Cardiac septum (tissue), 1 donor: ENCODE measurements at regions of chr1 and their contacts with region 1.

Region 1: DNA sequence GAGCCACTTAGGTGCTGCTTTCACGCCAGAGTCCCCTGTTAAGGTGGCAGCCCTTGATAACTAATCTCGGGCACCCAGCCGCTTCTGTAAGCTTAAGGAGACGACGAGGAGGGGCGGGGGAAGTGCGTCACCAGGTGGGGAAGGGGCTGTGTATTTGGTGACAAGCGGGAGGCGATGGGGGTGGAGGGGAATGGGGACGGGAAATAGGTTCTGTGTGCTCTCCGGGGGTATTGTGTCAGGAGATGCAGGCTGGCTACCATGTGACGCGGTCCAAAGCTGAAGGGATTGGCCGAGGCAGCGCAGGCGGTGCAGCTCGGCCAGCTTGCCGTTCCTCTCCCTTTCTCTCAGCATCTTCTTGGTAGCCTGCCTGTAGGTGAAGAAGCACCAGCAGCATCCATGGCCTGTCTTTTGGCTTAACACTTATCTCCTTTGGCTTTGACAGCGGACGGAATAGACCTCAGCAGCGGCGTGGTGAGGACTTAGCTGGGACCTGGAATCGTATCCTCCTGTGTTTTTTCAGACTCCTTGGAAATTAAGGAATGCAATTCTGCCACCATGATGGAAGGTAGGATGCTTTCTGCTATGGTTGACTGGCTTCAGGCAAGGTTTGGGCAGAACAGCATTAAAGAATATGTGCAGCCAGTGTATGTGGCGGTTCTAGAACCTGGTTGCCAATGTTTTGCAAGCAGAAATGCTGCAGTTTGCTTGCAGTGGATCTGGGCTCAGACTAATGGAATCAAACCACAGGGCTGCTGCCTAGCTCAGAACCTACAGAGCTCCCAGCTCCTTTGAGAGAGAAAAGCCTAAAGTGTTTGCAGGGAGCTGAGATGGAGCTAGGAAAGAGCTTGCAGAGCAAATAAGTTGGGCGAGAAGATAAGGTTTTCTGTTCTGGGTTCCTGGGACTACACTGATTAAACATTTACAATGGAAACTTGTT is at the start of gene SGIP1:
- DNase-seq: peak; percentile 87
- total RNA-seq, gene SGIP1: 7.0 TPM

Region 2: DNA sequence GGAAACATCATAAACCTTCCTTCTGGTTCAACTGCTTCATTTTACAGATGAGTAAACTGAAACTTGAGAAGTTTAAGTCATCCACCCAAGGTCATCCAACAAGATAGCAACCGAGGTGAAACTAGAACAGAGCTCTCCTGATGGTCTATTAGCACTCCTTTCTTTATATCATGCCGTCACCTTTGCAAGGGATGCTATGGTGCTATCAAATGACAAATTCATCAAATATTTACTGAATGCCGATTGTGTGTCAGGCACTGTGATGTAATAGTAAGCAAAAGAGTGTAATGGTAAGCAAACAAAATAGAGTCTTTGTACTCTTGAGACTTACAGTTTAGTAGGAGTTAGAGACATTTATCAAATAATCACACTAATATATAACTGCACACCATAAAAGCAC is 14.1 kb before region 1 on chr1:
- intact Hi-C with region 1: no loop called
- DNase-seq: no peak

Region 3: DNA sequence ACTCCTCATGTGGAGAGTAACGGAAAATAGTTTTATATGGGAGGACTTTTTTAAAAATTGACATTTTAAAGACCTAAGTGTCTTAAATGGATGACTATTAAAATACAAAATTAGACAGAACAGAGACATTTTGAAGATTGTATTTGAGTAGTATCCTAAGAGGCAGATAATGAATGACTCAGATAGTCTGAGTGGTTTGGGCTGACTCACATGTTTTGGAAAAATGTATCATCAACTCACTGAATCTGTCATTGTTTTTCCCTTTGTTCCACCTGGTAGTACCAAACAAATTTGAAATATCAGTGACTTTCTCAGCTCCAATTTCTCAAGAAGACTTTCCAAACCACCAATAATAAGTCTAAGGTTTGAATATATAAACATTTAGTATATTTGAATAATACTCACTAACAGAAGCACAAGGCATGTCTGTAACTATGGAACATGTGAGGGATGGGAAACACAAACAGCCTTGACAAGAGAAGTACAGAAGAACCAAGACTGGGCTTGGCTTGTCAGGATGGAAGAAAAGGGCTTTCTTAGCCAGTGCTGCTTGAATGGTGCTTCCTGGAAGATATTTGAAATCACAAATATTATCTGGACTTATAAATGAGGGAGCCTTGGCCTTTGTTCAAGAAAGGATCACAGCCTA is 90.5 kb after region 1 on chr1:
- intact Hi-C with region 1: loop called (anchors 5 kb)
- DNase-seq: no peak